ENCODE measurements at regions of chr9 and their contacts with region 1.

Region 1: GRCh38 chr9:137070201-137070905 is at the start of gene SAPCD2:
- DNase-seq: peak; percentile 93

Region 2: DNA sequence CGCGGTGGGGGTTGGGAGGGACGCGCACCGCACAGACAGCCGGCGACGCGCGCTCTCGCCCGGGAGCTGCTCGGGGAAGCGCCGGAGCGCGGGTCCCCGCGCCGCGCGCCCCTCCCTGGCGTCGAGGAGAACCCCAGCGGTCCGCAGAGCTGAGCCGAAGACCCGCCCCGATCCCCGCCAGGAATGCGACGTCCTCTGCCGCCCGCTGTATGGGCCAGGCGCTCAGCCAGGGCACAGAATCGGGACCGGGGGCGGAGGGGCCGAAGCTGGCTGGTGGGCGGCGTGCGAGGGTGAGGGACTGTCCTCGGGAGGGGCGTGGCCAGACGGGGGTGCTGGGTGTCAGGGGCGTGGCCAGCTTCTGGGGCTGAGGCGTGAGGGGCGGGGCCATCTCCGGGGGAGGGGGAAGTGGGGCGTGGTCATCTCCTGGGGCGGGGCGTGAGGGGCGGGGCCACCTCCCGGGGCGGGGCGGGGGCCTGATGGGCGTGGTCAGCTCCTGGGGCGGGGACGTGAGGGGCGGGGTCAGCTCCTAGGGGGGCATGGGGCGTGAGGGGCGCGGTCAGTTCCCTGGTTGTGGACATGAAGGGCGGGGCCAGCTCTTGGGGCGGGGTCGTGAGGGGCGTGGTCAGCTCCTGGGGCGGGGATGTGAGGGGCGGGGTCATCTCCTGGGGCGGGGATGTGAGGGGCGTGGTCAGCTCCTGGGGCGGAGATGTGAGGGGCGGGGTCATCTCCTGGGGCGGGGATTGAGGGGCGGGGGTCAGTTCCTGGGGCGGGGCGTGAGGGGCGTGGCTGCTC is 92.1 kb before region 1 on chr9:
- CTCF ChIA-PET with region 1: no interaction called
- POLR2A ChIA-PET with region 1: no interaction called
- DNase-seq: peak; percentile 96

Region 3: GRCh38 chr9:137029058-137029936 is 41.1 kb before region 1 on chr9:
- CTCF ChIA-PET with region 1: interaction called, 11 read pairs
- POLR2A ChIA-PET with region 1: no interaction called
- DNase-seq: peak; percentile 75

Region 4: DNA sequence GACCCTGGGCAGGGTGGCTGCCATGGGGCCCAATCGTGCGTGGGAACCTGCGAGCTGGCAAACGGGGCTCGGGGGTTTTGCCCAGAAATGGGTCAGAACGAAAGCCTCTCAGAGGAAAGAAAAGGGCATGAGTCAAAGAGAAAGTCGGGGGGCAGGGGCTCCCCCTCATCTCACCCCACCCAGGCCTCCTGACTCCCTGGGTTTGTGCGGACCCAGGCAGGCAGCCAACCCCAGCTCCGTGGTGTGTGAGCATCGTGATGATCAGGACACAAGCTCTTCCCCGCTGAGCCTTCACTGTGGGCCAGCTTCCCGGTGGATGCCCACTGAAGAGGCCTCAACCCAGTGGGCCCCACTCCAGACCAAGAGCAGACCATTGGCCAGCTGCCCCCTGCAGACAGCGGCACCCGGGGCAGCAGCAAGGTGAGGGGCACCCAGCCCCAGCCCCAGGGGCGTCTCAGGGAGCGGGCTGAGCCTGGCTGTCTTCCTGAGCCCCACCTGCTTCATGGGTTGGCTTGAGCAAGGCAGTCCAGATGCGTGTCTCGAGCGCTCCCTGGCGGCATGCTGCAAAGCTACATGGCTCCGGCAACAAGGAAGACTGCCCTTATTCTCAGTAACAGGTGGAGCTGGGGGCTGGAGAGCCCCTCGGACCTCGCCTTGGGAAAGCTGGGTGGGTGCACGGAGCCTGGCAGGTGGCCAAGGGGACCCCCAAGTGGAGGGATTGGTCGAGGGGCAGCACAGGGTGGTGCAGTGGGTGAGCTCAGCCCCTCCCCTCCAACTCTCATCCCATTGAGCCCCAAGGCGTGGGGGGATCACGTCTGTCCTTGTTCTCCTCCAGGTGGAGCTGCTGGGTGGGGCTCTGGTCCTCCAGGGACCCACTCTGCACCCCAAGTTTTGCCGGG is 35.2 kb before region 1 on chr9:
- CTCF ChIA-PET with region 1: interaction called, 16 read pairs
- POLR2A ChIA-PET with region 1: no interaction called
- DNase-seq: peak; percentile 90

Region 5: DNA sequence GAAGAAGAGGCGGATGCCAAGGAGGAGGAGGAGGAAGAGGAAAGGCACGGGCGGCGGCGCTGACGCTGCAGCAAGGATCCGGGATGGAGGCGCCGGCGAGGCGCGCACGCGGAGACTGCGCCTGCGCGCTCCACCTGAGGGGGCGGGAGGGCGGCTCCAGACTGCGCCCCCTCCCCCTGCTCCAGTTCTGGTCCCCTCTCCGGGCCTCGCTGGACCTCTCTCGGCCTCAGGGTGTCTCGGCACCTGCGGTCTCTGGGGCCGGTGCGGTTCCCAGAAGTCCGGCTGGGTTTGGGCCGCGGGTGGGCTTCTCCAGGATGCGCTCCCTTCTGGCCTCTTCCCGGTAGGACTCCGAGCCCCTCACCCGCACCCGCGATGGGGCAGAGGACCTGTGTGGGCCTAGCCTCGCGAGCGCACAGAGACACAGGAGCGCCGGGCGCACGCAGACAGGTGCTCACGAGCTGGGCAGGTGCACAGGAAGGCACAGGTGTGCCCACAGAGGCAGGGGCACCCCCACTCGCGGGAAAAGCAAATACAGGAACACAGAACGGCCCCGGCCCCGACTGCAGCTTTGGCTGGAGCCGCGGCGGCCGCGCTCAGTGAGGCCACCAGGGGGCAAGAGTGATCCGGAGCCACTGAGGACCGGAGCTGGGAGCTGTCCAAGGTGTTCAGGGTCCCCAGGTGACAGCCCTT is 24.1 kb before region 1 on chr9 and contains the start of gene NPDC1:
- CTCF ChIA-PET with region 1: interaction called, 14 read pairs
- POLR2A ChIA-PET with region 1: interaction called, 3 read pairs
- DNase-seq: peak; percentile 93

Region 6: DNA sequence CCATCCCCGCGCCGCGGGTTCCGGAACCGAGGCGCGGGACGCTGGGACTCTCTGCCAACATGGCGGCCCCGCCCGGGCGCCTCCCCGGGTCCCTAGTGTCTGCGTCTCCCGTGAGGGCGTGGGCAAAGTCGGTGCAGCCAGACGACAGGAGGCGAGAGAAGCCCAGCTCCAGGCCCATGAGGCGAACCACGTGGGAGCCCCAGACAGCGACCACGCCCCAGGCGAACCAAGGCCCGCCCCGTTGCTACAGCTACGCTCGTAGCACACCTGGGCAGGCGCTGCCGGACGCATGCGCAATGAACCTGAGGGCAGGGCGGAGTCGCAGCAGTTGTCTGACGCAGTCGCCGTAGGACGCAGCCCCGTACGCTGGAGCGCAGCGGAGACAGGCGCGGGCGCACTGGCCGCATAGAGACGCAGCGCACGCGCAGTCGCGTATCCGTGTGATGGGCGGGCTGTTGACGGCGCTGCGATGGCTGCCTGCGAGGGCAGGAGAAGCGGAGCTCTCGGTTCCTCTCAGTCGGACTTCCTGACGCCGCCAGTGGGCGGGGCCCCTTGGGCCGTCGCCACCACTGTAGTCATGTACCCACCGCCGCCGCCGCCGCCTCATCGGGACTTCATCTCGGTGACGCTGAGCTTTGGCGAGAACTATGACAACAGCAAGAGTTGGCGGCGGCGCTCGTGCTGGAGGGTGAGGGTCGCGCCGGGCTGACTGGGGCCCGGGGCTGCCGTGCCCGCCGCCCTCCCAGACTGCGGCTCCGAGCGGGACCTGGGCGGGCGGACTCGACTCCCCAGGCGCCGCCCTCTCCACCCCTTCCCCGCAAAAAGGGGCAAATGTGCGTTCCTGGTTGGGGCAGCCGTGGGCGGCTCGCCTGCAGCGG is 16.4 kb after region 1 on chr9 and contains the start of gene MAN1B1:
- CTCF ChIA-PET with region 1: interaction called, 8 read pairs
- POLR2A ChIA-PET with region 1: interaction called, 27 read pairs
- DNase-seq: peak; percentile 99